ENCODE measurements at regions of chr19 and their contacts with region 1.

Region 1: GRCh38 chr19:47514869-47515588 is at the start of gene NAPA:
- DNase-seq: peak; percentile 99
- ATAC-seq: peak; percentile 92
- H3K4me3 Mint-ChIP-seq: peak within 1 kb of the TSS; percentile 97
- H3K27ac Mint-ChIP-seq: peak within 1 kb of the TSS; percentile 92
- H3K4me1 Mint-ChIP-seq: peaks cover 83% of the 10 kb centered on the region
- H3K27me3 Mint-ChIP-seq: no peaks in the 10 kb centered on the region
- CTCF ChIP-seq: no peak
- total RNA-seq, gene NAPA: 56.8 and 70.6 TPM in 2 replicates

Region 2: GRCh38 chr19:47094557-47095475 is 420.2 kb before region 1 on chr19:
- CTCF ChIA-PET with region 1: no interaction called
- POLR2A ChIA-PET with region 1: no interaction called
- intact Hi-C with region 1: no loop called
- DNase-seq: no peak
- ATAC-seq: no peak
- H3K4me3 Mint-ChIP-seq: peak overlapping the region; percentile 55
- H3K27ac Mint-ChIP-seq: peak overlapping the region; percentile 68
- H3K4me1 Mint-ChIP-seq: peaks cover 44% of the 10 kb centered on the region
- H3K27me3 Mint-ChIP-seq: no peaks in the 10 kb centered on the region
- CTCF ChIP-seq: no peak

Region 3: GRCh38 chr19:47348819-47349795 is 165.9 kb before region 1 on chr19 and contains the start of gene DHX34:
- CTCF ChIA-PET with region 1: no interaction called
- POLR2A ChIA-PET with region 1: no interaction called
- intact Hi-C with region 1: loop called (anchors 1 kb)
- DNase-seq: peak; percentile 99
- ATAC-seq: peak; percentile 98
- H3K4me3 Mint-ChIP-seq: peak within 1 kb of the TSS; percentile 98
- H3K27ac Mint-ChIP-seq: peak within 1 kb of the TSS; percentile 90
- H3K4me1 Mint-ChIP-seq: peaks cover 40% of the 10 kb centered on the region
- H3K27me3 Mint-ChIP-seq: no peaks in the 10 kb centered on the region
- CTCF ChIP-seq: peak; percentile 65
- total RNA-seq, gene DHX34: 17.4 and 20.0 TPM in 2 replicates

Region 4: DNA sequence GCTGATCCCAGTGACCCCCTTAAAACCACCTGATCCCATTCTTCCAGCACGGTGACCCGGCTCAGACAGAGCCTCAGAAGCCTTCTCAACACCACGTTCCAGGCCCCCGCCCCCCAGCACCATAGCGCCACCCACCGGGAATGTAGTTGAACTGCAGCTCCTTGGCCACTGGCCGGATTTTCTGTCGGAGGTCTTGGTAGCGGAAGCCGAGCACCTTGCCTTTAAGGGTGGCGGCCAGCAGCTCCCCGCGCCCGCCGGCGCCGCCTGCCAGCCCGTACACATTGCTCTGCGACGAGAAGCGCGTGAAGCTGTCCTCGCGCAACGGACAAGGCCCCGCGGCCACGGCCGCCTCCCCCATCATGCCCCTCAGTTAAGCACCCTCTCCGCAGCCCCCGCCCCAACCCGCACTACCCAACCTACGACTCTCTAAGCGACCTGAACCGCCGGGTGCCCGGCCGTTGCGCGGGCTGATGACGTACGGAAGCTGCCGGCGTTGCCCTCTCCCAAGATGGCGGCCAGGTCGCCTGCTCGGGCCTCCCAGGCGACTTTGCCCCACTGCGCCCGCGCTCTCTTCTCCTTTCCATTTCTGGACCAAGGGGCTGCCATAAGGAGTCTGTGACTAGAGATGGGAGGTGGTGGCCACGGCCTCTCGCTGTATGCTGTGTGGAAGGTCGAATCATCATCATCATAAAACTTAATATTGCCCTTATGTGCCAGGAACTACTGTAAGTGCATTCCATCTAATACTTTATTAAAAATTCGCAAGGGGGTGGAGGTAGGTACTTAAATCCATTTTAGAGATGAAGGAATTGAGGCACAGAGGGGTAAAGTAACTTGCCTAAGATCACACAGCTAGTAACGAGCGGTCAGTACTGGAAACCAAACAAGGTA is 31.0 kb before region 1 on chr19 and contains the start of gene KPTN:
- CTCF ChIA-PET with region 1: interaction called, 12 read pairs
- POLR2A ChIA-PET with region 1: interaction called, 16 read pairs
- intact Hi-C with region 1: loop called (anchors 1 kb)
- DNase-seq: peak; percentile 85
- ATAC-seq: peak; percentile 87
- H3K4me3 Mint-ChIP-seq: peak within 1 kb of the TSS; percentile 98
- H3K27ac Mint-ChIP-seq: peak within 1 kb of the TSS; percentile 99
- H3K4me1 Mint-ChIP-seq: peaks cover 42% of the 10 kb centered on the region
- H3K27me3 Mint-ChIP-seq: no peaks in the 10 kb centered on the region
- CTCF ChIP-seq: no peak
- total RNA-seq, gene KPTN: 8.0 and 8.7 TPM in 2 replicates

Region 5: GRCh38 chr19:47608074-47608918 is 93.3 kb after region 1 on chr19:
- CTCF ChIA-PET with region 1: interaction called, 3 read pairs
- POLR2A ChIA-PET with region 1: interaction called, 6 read pairs
- intact Hi-C with region 1: loop called (anchors 1 kb)
- DNase-seq: peak; percentile 99
- ATAC-seq: peak; percentile 90
- H3K4me3 Mint-ChIP-seq: peak overlapping the region; percentile 84
- H3K27ac Mint-ChIP-seq: peak overlapping the region; percentile 71
- H3K4me1 Mint-ChIP-seq: peaks cover 25% of the 10 kb centered on the region
- H3K27me3 Mint-ChIP-seq: no peaks in the 10 kb centered on the region
- CTCF ChIP-seq: no peak

Region 6: DNA sequence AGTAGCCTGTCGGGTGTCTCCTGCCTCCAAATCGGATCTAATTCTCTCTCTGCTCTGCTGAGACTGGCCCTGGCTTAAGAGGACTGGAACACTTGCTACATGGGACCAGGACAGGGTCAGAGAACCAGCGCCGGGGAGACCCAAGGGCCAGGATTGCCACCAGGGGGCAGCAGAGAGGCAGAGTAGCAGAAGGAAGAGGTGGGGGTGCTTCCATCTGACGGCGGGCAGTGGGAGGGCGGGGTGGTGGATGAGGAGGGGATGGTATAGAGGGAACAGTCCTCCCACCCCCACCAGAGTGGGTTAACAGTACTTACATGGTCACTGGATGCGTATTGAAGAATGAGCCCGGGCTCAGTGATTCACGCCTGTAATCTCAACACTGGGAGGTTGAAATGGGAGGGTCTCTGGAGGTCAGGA is 275.4 kb after region 1 on chr19:
- CTCF ChIA-PET with region 1: no interaction called
- POLR2A ChIA-PET with region 1: no interaction called
- intact Hi-C with region 1: loop called (anchors 1 kb)
- DNase-seq: peak; percentile 74
- ATAC-seq: peak; percentile 58
- H3K4me3 Mint-ChIP-seq: no peak overlapping the region
- H3K27ac Mint-ChIP-seq: no peak overlapping the region
- H3K4me1 Mint-ChIP-seq: no peaks in the 10 kb centered on the region
- H3K27me3 Mint-ChIP-seq: peaks cover 2% of the 10 kb centered on the region
- CTCF ChIP-seq: peak; percentile 17